B cell (primary cell): ENCODE measurements at regions of chr15 and their contacts with region 1.

Region 1: DNA sequence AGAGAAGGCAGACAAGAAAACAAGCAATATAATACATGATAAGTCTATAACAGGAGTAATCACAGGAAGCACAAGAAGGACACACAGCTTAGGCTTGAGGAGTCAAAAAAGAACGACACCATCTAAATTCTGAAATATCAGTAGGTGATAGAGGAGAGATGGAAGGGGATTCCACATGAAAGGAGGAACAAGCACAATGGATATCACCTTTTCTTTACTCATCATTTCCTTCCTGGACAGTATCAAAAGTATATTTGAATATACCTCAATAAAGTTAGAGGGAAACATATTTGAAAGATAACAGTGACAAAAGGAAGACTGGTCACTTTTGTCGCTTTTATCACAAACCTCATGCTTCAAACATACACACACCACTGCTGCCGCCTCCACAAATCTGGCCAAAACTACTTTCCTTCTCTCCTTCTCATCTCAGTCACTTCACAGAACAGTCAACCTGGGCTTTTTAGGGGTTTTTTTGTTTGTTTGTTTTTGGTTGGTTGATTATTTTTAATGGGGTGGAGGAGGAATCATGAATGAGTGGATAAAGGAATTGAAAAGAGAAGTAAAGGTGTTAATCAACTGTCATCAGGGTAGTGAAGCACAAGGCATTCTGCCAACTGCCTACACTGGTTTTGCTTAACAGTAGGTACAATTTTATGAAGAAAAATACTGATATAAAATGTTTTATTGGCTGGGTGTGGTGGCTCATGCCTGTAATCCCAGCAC is 18.5 kb downstream of the DENND4A start:
- DNase-seq: peak; percentile 83
- ATAC-seq: peak; percentile 62
- H3K4me3 ChIP-seq: peak overlapping the region in 4 of 5 experiments; percentile 15 to 29 (median 18)
- H3K4me3 Mint-ChIP-seq: peak overlapping the region; percentile 80
- H3K27ac ChIP-seq: peak overlapping the region; percentile 90 to 93
- H3K27ac Mint-ChIP-seq: peak overlapping the region; percentile 92
- H3K4me1 ChIP-seq: peaks cover 78 to 88% of the 10 kb centered on the region in 2 donors
- H3K4me1 Mint-ChIP-seq: peaks cover 77% of the 10 kb centered on the region
- H3K27me3 ChIP-seq: no peaks in the 10 kb centered on the region
- H3K27me3 Mint-ChIP-seq: no peaks in the 10 kb centered on the region
- CTCF ChIP-seq: no peak

Region 2: GRCh38 chr15:65712415-65712814 is 61.1 kb before region 1 on chr15:
- CTCF ChIA-PET with region 1: no interaction called
- POLR2A ChIA-PET with region 1: no interaction called
- intact Hi-C with region 1: loop called (anchors 5 kb)
- DNase-seq: no peak
- ATAC-seq: no peak
- H3K4me3 ChIP-seq: no peak overlapping the region
- H3K4me3 Mint-ChIP-seq: no peak overlapping the region
- H3K27ac ChIP-seq: peak overlapping the region in 1 of 2 donors; percentile 12
- H3K27ac Mint-ChIP-seq: no peak overlapping the region
- H3K4me1 ChIP-seq: no peaks in the 10 kb centered on the region
- H3K4me1 Mint-ChIP-seq: peaks cover 2% of the 10 kb centered on the region
- H3K27me3 ChIP-seq: no peaks in the 10 kb centered on the region
- H3K27me3 Mint-ChIP-seq: no peaks in the 10 kb centered on the region
- CTCF ChIP-seq: no peak

Region 3: GRCh38 chr15:65787260-65787659 is 13.7 kb after region 1 on chr15:
- CTCF ChIA-PET with region 1: interaction called, 5 read pairs
- POLR2A ChIA-PET with region 1: interaction called, 5 read pairs
- intact Hi-C with region 1: loop called (anchors 1 kb)
- DNase-seq: no peak
- ATAC-seq: no peak
- H3K4me3 ChIP-seq: peak overlapping the region in 4 of 5 experiments; percentile 13 to 58 (median 28)
- H3K4me3 Mint-ChIP-seq: peak overlapping the region; percentile 59
- H3K27ac ChIP-seq: peak overlapping the region; percentile 68 to 72
- H3K27ac Mint-ChIP-seq: peak overlapping the region; percentile 79
- H3K4me1 ChIP-seq: peaks cover 44 to 53% of the 10 kb centered on the region in 2 donors
- H3K4me1 Mint-ChIP-seq: peaks cover 51% of the 10 kb centered on the region
- H3K27me3 ChIP-seq: no peaks in the 10 kb centered on the region
- H3K27me3 Mint-ChIP-seq: no peaks in the 10 kb centered on the region
- CTCF ChIP-seq: no peak

Region 4: DNA sequence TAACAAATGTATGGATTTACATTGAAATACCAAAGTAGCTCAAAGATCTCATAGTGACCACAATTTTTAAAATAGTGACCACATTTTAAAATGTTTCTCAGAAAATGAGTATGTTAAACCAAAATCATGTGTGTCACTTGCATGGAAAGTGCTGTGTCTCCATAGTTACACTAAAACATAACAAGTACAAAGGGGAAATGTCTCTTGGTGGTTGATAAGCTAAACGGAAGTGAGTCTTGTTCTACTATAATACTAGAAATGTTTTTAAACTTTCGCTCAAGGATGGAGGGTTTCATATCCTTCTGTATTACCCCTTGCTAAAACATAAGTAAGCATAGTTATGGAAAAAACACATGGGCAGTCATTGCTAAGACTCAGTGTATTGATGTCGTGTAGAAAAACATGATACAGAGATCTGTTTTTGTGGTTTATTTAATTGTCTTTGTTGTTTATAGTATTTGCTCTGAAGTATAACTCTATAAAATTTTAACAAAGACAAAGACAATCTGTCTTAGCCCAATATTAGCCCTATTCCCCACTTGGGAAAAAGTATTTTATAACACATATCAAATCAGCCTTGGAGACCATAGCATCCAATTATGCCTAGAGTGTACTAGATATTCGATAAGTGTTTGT is 45.5 kb after region 1 on chr15:
- CTCF ChIA-PET with region 1: interaction called, 3 read pairs
- POLR2A ChIA-PET with region 1: no interaction called
- intact Hi-C with region 1: loop called (anchors 5 kb)
- DNase-seq: peak; percentile 91
- ATAC-seq: peak; percentile 78
- H3K4me3 ChIP-seq: peak overlapping the region in 2 of 5 experiments; percentile 21 to 40
- H3K4me3 Mint-ChIP-seq: peak overlapping the region; percentile 70
- H3K27ac ChIP-seq: peak overlapping the region; percentile 91 to 94
- H3K27ac Mint-ChIP-seq: peak overlapping the region; percentile 96
- H3K4me1 ChIP-seq: peaks cover 66 to 77% of the 10 kb centered on the region in 2 donors
- H3K4me1 Mint-ChIP-seq: peaks cover 74% of the 10 kb centered on the region
- H3K27me3 ChIP-seq: no peaks in the 10 kb centered on the region
- H3K27me3 Mint-ChIP-seq: no peaks in the 10 kb centered on the region
- CTCF ChIP-seq: no peak